Activated naive CD4-positive, alpha-beta T cell treated with anti-CD3 and anti-CD28 coated beads for 36 hours (primary cell): ENCODE measurements at regions of chr3 and their contacts with region 1.

Region 1: DNA sequence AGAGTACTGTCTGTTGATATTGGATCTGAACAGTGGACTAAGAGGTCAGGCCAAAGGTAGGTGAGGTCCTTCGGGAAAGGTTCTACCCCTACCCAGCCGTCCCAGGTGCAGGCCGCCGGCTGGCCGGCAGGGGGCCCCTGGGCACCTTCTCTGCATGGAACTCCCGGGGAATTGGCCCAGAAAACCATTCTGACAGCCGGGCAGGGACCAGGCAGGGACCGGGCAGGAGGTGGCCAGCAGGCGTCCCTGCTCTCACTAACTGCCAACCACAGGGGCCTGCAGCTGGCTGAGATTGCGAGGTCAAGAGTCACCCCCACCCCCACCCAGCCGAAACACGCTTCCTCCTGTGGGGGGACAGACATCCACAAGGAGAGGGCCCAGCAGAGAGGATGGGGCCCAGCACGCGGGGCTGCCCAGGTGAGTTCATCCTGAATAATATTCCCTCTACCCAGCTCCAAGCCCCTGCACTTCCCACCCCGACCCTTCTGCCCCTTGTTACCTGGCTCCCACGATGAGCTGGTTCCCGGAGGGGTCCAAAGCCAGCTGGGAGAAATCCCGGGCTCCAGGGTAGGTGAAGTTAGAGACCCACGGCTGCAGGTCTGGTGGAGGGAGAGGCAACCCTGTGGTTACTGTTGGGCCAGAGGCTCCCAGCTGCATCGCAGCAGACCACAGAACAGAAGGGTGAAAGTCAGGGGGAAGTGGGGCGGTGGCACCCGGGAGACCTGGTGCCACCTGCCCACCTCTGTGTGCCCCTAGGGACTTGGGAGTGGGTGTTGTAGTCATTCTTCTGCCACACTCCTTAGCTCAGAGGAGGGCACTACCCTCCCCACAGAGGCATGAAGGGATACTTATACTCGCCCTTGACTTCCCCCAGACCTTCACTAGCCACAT is 84.4 kb downstream of the SEMA5B start:
- DNase-seq: peak; percentile 49
- H3K4me3 Mint-ChIP-seq: no peak overlapping the region
- H3K27ac Mint-ChIP-seq: no peak overlapping the region
- H3K4me1 Mint-ChIP-seq: no peaks in the 10 kb centered on the region
- H3K27me3 Mint-ChIP-seq: no peaks in the 10 kb centered on the region

Region 2: DNA sequence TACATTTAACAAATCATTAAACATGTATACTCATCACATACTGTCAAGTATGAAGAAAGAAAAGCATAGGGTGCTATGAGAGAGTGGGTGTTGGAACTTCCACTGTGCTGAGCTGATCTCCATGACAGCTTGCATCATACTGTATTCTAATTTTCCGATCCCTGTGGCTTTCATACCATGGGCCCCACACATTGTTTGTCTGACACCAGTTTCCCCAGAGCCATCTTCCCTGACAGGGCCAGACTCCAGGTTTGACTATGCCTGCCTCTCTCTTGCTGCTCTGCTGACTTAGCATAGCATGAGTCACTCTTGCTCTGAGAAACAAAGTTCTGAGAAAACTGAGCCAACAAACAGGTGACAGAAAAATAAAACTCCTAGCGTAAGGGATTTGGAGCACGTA is 796.7 kb before region 1 on chr3:
- CTCF ChIA-PET with region 1: no interaction called
- intact Hi-C with region 1: no loop called
- DNase-seq: peak; percentile 86
- H3K4me3 Mint-ChIP-seq: no peak overlapping the region
- H3K27ac Mint-ChIP-seq: peak overlapping the region; percentile 46
- H3K4me1 Mint-ChIP-seq: peaks cover 28% of the 10 kb centered on the region
- H3K27me3 Mint-ChIP-seq: peaks cover 1% of the 10 kb centered on the region

Region 3: GRCh38 chr3:122858373-122858772 is 84.8 kb before region 1 on chr3:
- CTCF ChIA-PET with region 1: interaction called, 3 read pairs
- intact Hi-C with region 1: loop called (anchors 5 kb)
- DNase-seq: no peak
- H3K4me3 Mint-ChIP-seq: no peak overlapping the region
- H3K27ac Mint-ChIP-seq: no peak overlapping the region
- H3K4me1 Mint-ChIP-seq: peaks cover 8% of the 10 kb centered on the region
- H3K27me3 Mint-ChIP-seq: no peaks in the 10 kb centered on the region